Activated CD4-positive, alpha-beta T cell treated with anti-CD3 and anti-CD28 coated beads, Interleukin-2, amount 10 ng/mL, durations not matched to agents 24 days and 14 days (primary cell): ENCODE measurements at regions of chr3 and their contacts with region 1.

Region 1: DNA sequence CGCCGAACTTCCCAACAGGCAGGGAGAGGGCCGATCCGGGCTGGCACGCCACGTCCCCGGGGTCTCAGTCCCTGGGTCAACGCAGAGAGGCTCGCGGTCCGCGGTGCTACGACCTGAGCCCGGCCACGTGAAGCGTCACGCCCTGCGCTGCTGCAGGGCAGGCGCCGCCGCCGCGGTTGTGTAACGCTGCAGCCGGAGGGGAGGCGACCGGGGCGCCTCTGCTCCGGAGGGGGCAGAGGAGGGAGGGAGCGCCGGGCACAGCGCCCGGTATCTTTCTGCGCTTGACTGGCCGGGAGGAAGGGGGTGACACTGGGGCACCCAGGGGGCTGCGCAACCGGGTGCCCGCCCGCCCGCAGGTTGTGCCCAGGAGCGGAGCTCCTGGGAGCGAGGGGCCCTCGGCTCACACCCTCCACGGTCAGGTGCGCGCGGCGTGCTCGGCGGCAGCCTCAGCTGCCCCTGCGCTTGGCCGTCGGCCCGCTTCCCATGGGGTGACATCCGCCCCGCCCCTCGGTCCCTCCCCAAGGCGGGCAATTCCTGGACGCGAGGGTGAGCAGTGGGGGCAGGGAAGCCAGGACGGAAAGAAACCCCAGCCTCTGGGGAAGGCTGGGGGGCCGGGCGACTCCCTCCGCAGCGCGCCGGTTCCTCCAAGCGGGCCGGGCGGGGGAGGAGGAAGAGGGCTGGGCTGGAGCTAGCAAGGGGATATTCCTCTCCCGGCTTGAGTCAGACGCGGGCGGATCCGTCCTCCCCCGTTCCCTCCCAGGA is 852 bp upstream of the BHLHE40 start:
- DNase-seq: peak; percentile 97
- H3K4me3 Mint-ChIP-seq: peak overlapping the region; percentile 96
- H3K27ac Mint-ChIP-seq: peak overlapping the region; percentile 100
- H3K4me1 Mint-ChIP-seq: peaks cover 33% of the 10 kb centered on the region
- H3K27me3 Mint-ChIP-seq: no peaks in the 10 kb centered on the region

Region 2: GRCh38 chr3:4722103-4722502 is 256.3 kb before region 1 on chr3:
- intact Hi-C with region 1: loop called (anchors 1 kb)
- DNase-seq: peak; percentile 80
- H3K4me3 Mint-ChIP-seq: no peak overlapping the region
- H3K27ac Mint-ChIP-seq: peak overlapping the region; percentile 68
- H3K4me1 Mint-ChIP-seq: peaks cover 61% of the 10 kb centered on the region
- H3K27me3 Mint-ChIP-seq: no peaks in the 10 kb centered on the region

Region 3: GRCh38 chr3:4804161-4805058 is 174.0 kb before region 1 on chr3:
- intact Hi-C with region 1: loop called (anchors 1 kb)
- DNase-seq: peak; percentile 64
- H3K4me3 Mint-ChIP-seq: peak overlapping the region; percentile 30
- H3K27ac Mint-ChIP-seq: peak overlapping the region; percentile 50
- H3K4me1 Mint-ChIP-seq: peaks cover 53% of the 10 kb centered on the region
- H3K27me3 Mint-ChIP-seq: no peaks in the 10 kb centered on the region

Region 4: DNA sequence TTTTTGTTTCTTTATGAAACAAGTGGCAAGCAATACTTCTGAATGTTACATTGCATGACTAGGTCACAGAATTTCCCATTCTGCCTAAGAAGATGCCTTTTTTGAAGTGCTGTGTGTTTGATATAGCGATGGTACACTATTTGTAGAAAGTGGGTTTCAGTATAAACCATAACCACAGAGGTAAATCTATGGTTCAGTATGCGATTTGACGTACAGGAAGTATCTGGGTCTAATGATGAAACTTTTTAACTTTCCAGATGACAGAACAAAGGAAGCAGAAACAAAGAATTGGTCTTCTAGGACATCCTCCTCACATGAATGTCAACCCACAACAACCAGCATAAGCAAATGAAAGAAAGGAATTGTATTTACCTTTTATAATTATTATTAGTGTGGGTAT is 132.5 kb before region 1 on chr3:
- intact Hi-C with region 1: loop called (anchors 1 kb)
- DNase-seq: peak; percentile 80
- H3K4me3 Mint-ChIP-seq: peak overlapping the region; percentile 59
- H3K27ac Mint-ChIP-seq: peak overlapping the region; percentile 82
- H3K4me1 Mint-ChIP-seq: peaks cover 82% of the 10 kb centered on the region
- H3K27me3 Mint-ChIP-seq: no peaks in the 10 kb centered on the region

Region 5: DNA sequence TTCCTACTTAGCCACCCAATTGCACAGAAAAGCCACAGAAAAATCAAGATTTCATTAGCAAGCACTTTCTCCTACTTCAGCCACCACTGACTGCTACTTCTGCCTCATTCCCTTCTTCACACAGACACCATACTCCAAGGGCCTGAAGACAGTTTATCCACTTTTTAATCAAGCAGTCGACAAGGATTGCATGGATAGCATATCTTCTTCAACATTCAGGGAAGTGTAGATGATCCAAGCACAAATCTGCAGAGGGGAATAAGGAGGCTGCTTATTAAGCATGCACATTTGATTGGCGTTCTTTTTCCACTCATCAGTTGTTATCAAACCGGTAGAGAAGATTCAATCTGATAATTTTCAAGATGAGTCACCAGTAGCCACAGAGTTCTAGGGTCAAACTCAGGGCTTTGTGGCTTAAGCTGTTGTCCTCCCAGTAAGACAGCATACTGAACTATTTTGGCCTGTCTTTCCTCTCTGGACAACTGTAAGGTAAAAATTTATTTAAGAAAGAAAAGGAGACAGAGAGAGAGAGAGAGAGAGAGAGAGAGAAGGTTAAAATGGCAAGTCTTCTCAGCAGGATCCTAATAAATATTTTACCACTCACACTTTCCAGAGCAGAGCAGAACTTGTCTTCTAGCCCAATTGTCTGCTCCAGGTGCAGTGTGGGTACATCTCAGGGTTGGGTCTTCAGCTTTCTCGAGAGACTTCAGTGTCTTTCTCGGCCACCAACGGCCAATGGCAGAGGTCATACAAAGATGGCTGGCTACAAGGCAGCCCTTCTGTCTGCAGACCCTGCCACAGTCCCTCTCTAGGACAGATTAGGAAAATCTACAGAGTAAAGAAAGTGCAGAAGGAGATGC is 79.7 kb before region 1 on chr3:
- intact Hi-C with region 1: loop called (anchors 2 kb)
- DNase-seq: peak; percentile 72
- H3K4me3 Mint-ChIP-seq: peak overlapping the region; percentile 24
- H3K27ac Mint-ChIP-seq: peak overlapping the region; percentile 91
- H3K4me1 Mint-ChIP-seq: peaks cover 49% of the 10 kb centered on the region
- H3K27me3 Mint-ChIP-seq: no peaks in the 10 kb centered on the region

Region 6: GRCh38 chr3:5006755-5007202 is 28.4 kb after region 1 on chr3:
- intact Hi-C with region 1: loop called (anchors 1 kb)
- DNase-seq: peak; percentile 95
- H3K4me3 Mint-ChIP-seq: peak overlapping the region; percentile 71
- H3K27ac Mint-ChIP-seq: peak overlapping the region; percentile 95
- H3K4me1 Mint-ChIP-seq: peaks cover 61% of the 10 kb centered on the region
- H3K27me3 Mint-ChIP-seq: no peaks in the 10 kb centered on the region

Region 7: GRCh38 chr3:5122030-5122740 is 143.8 kb after region 1 on chr3 and contains the start of gene ARL8B:
- intact Hi-C with region 1: loop called (anchors 2 kb)
- DNase-seq: peak; percentile 98
- H3K4me3 Mint-ChIP-seq: peak within 1 kb of the TSS; percentile 85
- H3K27ac Mint-ChIP-seq: peak within 1 kb of the TSS; percentile 96
- H3K4me1 Mint-ChIP-seq: peaks cover 23% of the 10 kb centered on the region
- H3K27me3 Mint-ChIP-seq: no peaks in the 10 kb centered on the region
- total RNA-seq, gene ARL8B: 46.8 and 50.4 TPM in 2 replicates

Region 8: GRCh38 chr3:5144316-5145011 is 166.1 kb after region 1 on chr3:
- intact Hi-C with region 1: no loop called
- DNase-seq: no peak
- H3K4me3 Mint-ChIP-seq: no peak overlapping the region
- H3K27ac Mint-ChIP-seq: no peak overlapping the region
- H3K4me1 Mint-ChIP-seq: peaks cover 10% of the 10 kb centered on the region
- H3K27me3 Mint-ChIP-seq: no peaks in the 10 kb centered on the region